AG04449 (cell line): ENCODE measurements at regions of chr1 and their contacts with region 1.

Region 1: DNA sequence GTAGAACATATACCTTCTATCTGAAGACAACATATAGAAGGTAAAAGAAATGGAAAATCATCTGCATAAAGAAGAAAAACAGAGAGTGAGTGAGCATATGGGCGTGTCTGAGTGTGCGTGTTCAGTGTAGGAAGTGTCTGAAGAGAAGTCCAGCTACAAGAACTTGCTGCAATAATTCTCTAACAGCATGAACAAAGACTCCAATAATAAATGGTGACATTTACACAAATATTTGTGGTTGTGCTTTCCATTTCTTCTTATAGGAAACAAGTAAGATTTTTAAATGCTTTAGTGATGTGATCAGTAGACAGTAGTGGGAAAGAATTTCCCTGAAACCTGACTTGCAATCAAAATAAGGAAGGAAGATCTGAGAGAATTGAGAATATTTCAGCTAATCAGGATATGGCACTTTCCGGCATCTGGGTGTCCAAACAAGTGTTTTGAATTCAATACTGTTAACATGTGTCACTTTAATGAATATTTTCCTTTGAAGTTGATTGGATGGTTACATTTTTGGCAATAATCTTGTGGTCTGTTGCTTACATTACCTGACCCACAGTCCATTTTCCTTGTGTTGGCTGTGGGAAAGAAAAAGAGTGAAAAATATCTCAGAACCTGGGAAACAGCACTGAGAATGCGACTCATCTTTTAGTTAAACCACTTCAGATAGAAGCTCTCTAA is 154.0 kb downstream of the TGFB2 start:
- DNase-seq: peak; percentile 83
- H3K4me3 ChIP-seq: peak overlapping the region; percentile 45
- CTCF ChIP-seq: no peak

Region 2: DNA sequence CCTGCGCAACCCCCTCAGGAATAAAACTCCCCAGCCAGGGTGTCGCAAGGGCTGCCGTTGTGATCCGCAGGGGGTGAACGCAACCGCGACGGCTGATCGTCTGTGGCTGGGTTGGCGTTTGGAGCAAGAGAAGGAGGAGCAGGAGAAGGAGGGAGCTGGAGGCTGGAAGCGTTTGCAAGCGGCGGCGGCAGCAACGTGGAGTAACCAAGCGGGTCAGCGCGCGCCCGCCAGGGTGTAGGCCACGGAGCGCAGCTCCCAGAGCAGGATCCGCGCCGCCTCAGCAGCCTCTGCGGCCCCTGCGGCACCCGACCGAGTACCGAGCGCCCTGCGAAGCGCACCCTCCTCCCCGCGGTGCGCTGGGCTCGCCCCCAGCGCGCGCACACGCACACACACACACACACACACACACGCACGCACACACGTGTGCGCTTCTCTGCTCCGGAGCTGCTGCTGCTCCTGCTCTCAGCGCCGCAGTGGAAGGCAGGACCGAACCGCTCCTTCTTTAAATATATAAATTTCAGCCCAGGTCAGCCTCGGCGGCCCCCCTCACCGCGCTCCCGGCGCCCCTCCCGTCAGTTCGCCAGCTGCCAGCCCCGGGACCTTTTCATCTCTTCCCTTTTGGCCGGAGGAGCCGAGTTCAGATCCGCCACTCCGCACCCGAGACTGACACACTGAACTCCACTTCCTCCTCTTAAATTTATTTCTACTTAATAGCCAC is 153.3 kb before region 1 on chr1:
- CTCF ChIA-PET with region 1: no interaction called
- POLR2A ChIA-PET with region 1: interaction called, 18 read pairs
- DNase-seq: no peak
- H3K4me3 ChIP-seq: peak overlapping the region; percentile 75
- CTCF ChIP-seq: no peak

Region 3: DNA sequence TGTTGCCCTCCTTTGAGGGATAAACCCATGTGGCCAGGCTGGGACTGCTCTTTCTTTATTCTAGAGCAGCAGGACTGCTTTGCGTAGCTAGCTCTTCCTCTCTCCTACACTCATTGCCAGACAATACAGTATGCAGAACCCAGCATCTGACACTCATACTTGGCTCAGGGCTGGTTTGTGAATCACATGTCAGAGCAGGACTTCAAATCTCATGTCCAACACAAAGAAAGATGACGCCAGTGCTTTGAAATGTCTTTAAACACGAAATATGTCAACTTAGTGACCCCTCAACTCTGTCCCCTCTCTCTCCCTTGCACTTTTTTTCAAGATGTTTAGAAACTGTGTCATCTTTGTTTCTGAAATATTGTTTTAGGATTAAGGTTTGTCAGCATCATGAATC is 19.0 kb before region 1 on chr1:
- CTCF ChIA-PET with region 1: no interaction called
- POLR2A ChIA-PET with region 1: interaction called, 13 read pairs
- DNase-seq: peak; percentile 89
- H3K4me3 ChIP-seq: no peak overlapping the region
- CTCF ChIP-seq: no peak

Region 4: DNA sequence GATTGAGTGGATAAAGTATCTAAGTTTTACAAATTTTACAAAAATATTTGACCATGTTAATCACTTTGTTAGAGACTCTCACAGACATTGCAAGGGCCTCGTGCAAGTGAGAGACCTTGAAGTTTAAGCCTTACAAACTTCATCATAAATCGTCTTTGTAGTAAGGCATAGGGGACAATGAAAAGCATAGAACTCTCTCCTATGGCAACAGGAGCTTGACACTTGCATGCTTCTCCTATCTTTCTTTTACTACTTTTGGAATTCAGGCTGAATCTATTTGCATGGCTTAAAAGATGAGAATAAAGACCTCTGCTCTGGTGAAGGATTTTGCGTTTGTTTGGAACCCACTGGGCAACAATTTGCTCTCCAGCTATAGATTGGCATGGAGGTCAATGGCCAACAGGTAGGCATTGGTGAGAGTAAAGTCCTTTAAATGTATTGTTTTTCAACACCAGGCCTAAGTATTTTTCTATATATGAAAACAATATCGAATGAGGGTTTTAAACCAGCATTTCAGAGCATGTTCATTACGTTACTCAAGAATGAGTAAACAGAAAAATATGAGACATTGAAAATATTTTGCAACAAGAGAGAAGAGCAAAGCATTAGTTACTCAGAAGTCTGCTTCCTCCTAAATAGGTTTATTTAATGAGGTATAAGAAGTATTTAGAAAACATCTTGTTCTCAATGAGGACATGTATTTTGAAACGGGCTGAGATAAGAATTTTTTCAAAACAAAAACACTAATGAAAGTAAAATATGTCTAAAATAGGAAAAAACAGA is 38.2 kb after region 1 on chr1:
- CTCF ChIA-PET with region 1: no interaction called
- POLR2A ChIA-PET with region 1: no interaction called
- DNase-seq: peak; percentile 49
- H3K4me3 ChIP-seq: no peak overlapping the region
- CTCF ChIP-seq: no peak

Region 5: GRCh38 chr1:218592688-218593087 is 93.5 kb after region 1 on chr1:
- CTCF ChIA-PET with region 1: no interaction called
- POLR2A ChIA-PET with region 1: no interaction called
- DNase-seq: peak; percentile 37
- H3K4me3 ChIP-seq: no peak overlapping the region
- CTCF ChIP-seq: no peak

Region 6: DNA sequence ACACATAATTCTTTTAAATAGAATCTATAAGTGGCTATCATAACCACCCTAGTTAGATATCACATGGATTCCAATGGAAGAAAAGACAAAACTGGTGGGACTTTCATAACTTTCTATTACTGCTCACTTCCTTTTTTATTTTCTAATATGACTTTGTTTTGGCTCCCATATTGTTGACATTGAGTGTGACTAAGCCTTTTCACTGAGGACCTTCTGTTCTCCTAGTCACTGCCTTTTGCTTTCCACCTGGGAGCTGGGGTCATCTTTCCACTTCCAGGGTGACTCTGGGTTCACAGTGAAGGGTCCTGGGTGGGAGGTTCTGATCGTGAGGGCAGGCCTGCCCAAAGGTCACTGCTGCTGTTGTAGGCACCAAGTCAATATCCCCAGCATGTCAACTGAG is 121.8 kb after region 1 on chr1:
- CTCF ChIA-PET with region 1: no interaction called
- POLR2A ChIA-PET with region 1: no interaction called
- DNase-seq: no peak
- H3K4me3 ChIP-seq: no peak overlapping the region
- CTCF ChIP-seq: no peak